CD4-positive, alpha-beta memory T cell (primary cell): ENCODE measurements at regions of chr3 and their contacts with region 1.

Region 1: DNA sequence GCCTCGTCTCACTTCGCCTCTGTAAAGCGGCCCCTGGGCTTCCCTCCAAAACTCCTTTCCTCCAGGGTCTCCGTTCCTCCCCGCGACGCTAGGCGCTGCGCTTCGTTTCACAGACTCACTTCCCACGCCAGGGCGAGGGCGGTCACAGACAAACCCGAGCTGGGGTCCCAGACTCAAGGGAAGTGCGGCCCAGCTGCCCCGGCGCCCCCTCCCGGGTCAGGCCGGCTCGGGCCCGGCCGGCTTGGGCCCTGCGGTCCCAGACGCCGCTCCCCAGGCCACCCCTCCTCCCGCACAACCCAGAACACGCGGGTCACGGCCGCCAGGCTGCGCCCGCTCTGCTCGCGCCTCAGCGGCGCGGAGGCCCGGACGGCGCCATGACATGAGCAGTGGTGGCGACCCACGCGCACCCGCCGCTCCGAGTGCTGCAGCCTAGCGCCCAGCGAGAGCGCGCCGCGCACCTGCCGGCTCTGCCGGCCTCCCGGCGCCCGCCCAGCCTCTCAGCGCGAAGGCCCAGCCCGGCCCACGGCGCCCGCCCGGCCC is 547 bp downstream of the NUP210 start:
- DNase-seq: peak in 4 of 5 donors; percentile 59 to 67 (median 66)
- H3K4me3 ChIP-seq: peak overlapping the region; percentile 55 to 84
- H3K4me3 Mint-ChIP-seq: peak overlapping the region; percentile 91 to 96 (median 94)
- H3K27ac ChIP-seq: peak overlapping the region; percentile 90
- H3K27ac Mint-ChIP-seq: peak overlapping the region; percentile 94 to 99 (median 97)
- H3K4me1 ChIP-seq: peaks cover 74% of the 10 kb centered on the region
- H3K4me1 Mint-ChIP-seq: peaks cover 45 to 85% (median 62%) of the 10 kb centered on the region in 4 donors
- H3K27me3 ChIP-seq: no peaks in the 10 kb centered on the region
- H3K27me3 Mint-ChIP-seq: no peaks in the 10 kb centered on the region

Region 2: GRCh38 chr3:13200946-13201345 is 218.6 kb before region 1 on chr3:
- CTCF ChIA-PET with region 1: no interaction called
- POLR2A ChIA-PET with region 1: no interaction called
- intact Hi-C with region 1: no loop called
- DNase-seq: no peak
- H3K4me3 ChIP-seq: no peak overlapping the region
- H3K4me3 Mint-ChIP-seq: no peak overlapping the region
- H3K27ac ChIP-seq: no peak overlapping the region
- H3K27ac Mint-ChIP-seq: no peak overlapping the region
- H3K4me1 ChIP-seq: peaks cover 10% of the 10 kb centered on the region
- H3K4me1 Mint-ChIP-seq: peaks cover 8 to 18% (median 12%) of the 10 kb centered on the region in 4 donors
- H3K27me3 ChIP-seq: peaks cover 3% of the 10 kb centered on the region
- H3K27me3 Mint-ChIP-seq: peaks cover 25 to 26% of the 10 kb centered on the region in 2 donors

Region 3: DNA sequence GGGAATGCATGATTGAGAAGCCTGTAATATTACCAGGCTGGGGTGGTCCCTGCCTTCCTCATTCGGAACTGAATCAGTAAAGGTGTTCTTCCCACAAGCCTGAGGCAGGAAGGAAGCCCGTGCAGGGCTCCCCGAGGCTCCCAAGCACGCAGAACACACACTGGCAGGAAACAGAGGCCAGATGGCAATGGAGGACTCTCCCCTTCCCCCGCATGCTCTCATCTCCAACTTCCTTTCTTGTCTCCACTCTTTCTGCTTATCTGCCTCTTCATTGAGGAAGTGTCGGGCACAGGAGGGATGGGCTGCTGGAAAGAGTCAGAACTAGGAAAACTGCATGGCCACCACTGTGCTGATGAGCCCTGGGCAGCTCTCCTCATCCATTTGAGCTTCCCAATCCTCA is 122.9 kb before region 1 on chr3:
- CTCF ChIA-PET with region 1: no interaction called
- POLR2A ChIA-PET with region 1: no interaction called
- intact Hi-C with region 1: no loop called
- DNase-seq: no peak
- H3K4me3 ChIP-seq: no peak overlapping the region
- H3K4me3 Mint-ChIP-seq: no peak overlapping the region
- H3K27ac ChIP-seq: no peak overlapping the region
- H3K27ac Mint-ChIP-seq: no peak overlapping the region
- H3K4me1 ChIP-seq: no peaks in the 10 kb centered on the region
- H3K4me1 Mint-ChIP-seq: peaks cover 0 to 8% (median under 1%) of the 10 kb centered on the region in 4 donors
- H3K27me3 ChIP-seq: peaks cover 6% of the 10 kb centered on the region
- H3K27me3 Mint-ChIP-seq: peaks cover 27 to 32% of the 10 kb centered on the region in 2 donors

Region 4: DNA sequence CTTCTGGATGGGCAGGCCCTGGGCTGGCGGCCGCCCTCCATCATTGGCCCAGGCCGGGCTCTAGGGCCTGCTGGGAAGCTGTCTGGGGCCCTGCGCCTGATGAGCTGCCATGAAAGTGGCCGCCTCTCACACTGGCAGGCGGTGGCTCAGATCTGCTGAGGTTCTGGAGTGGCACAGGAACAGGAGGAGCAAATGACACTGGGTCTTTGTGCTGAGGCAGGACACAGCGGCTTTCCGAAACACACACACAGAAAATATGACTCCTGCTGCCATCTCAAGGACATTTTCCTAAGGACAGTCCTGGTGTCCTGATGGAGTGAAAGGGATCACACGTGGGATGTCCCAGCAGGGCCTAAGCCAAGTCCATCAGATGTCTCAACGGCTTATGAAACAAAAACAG is 103.0 kb before region 1 on chr3:
- CTCF ChIA-PET with region 1: no interaction called
- POLR2A ChIA-PET with region 1: no interaction called
- intact Hi-C with region 1: no loop called
- DNase-seq: no peak
- H3K4me3 ChIP-seq: no peak overlapping the region
- H3K4me3 Mint-ChIP-seq: no peak overlapping the region
- H3K27ac ChIP-seq: no peak overlapping the region
- H3K27ac Mint-ChIP-seq: no peak overlapping the region
- H3K4me1 ChIP-seq: no peaks in the 10 kb centered on the region
- H3K4me1 Mint-ChIP-seq: peaks cover 0 to 3% (median 0%) of the 10 kb centered on the region in 4 donors
- H3K27me3 ChIP-seq: no peaks in the 10 kb centered on the region
- H3K27me3 Mint-ChIP-seq: no peaks in the 10 kb centered on the region

Region 5: GRCh38 chr3:13379201-13379830 is 40.3 kb before region 1 on chr3:
- CTCF ChIA-PET with region 1: no interaction called
- POLR2A ChIA-PET with region 1: interaction called, 3 read pairs
- intact Hi-C with region 1: loop called (anchors 5 kb)
- DNase-seq: no peak
- H3K4me3 ChIP-seq: no peak overlapping the region
- H3K4me3 Mint-ChIP-seq: no peak overlapping the region
- H3K27ac ChIP-seq: no peak overlapping the region
- H3K27ac Mint-ChIP-seq: peak overlapping the region in 1 of 7 donors; percentile 54
- H3K4me1 ChIP-seq: no peaks in the 10 kb centered on the region
- H3K4me1 Mint-ChIP-seq: peaks cover 0 to 7% (median 3%) of the 10 kb centered on the region in 4 donors
- H3K27me3 ChIP-seq: no peaks in the 10 kb centered on the region
- H3K27me3 Mint-ChIP-seq: no peaks in the 10 kb centered on the region

Region 6: GRCh38 chr3:13391308-13391707 is 28.3 kb before region 1 on chr3:
- CTCF ChIA-PET with region 1: interaction called, 31 read pairs
- POLR2A ChIA-PET with region 1: interaction called, 19 read pairs
- intact Hi-C with region 1: loop called (anchors 2 kb)
- DNase-seq: peak in 4 of 5 donors; percentile 19 to 28 (median 22)
- H3K4me3 ChIP-seq: no peak overlapping the region
- H3K4me3 Mint-ChIP-seq: no peak overlapping the region
- H3K27ac ChIP-seq: no peak overlapping the region
- H3K27ac Mint-ChIP-seq: peak overlapping the region in 6 of 7 donors; percentile 30 to 92 (median 65)
- H3K4me1 ChIP-seq: peaks cover 3% of the 10 kb centered on the region
- H3K4me1 Mint-ChIP-seq: peaks cover 8 to 30% (median 15%) of the 10 kb centered on the region in 4 donors
- H3K27me3 ChIP-seq: no peaks in the 10 kb centered on the region
- H3K27me3 Mint-ChIP-seq: no peaks in the 10 kb centered on the region

Region 7: DNA sequence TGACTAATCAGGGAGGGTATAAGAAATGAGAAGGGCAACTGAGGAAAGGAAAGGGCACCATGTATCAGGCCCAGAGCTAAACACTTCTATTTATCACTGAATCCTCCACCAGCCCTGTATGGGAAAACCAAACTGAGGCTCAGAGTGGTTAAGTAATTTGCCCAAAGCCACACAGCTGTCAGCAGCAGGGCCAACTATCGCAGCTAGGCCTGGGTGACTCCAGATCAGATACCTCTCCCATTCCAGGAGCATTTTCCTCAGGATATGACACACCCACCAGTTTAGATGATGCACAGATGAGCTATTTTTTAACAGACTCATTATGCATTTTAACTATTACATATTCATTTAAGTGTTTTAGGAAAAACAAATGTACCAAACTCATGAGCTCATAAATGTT is 14.0 kb before region 1 on chr3:
- CTCF ChIA-PET with region 1: interaction called, 11 read pairs
- POLR2A ChIA-PET with region 1: interaction called, 22 read pairs
- intact Hi-C with region 1: no loop called
- DNase-seq: no peak
- H3K4me3 ChIP-seq: no peak overlapping the region
- H3K4me3 Mint-ChIP-seq: peak overlapping the region in 1 of 8 donors; percentile 1
- H3K27ac ChIP-seq: no peak overlapping the region
- H3K27ac Mint-ChIP-seq: peak overlapping the region; percentile 8 to 86 (median 65)
- H3K4me1 ChIP-seq: peaks cover 36% of the 10 kb centered on the region
- H3K4me1 Mint-ChIP-seq: peaks cover 31 to 61% (median 45%) of the 10 kb centered on the region in 4 donors
- H3K27me3 ChIP-seq: no peaks in the 10 kb centered on the region
- H3K27me3 Mint-ChIP-seq: no peaks in the 10 kb centered on the region

Region 8: GRCh38 chr3:13479581-13480339 is 60.2 kb after region 1 on chr3 and contains the start of gene HDAC11:
- CTCF ChIA-PET with region 1: interaction called, 3 read pairs
- POLR2A ChIA-PET with region 1: interaction called, 10 read pairs
- intact Hi-C with region 1: loop called (anchors 2 kb)
- DNase-seq: peak; percentile 96 to 97 (median 96)
- H3K4me3 ChIP-seq: peak within 1 kb of the TSS; percentile 52 to 92
- H3K4me3 Mint-ChIP-seq: peak within 1 kb of the TSS; percentile 91 to 95 (median 94)
- H3K27ac ChIP-seq: peak within 1 kb of the TSS; percentile 90
- H3K27ac Mint-ChIP-seq: peak within 1 kb of the TSS; percentile 94 to 96 (median 96)
- H3K4me1 ChIP-seq: peaks cover 28% of the 10 kb centered on the region
- H3K4me1 Mint-ChIP-seq: peaks cover 6 to 35% (median 20%) of the 10 kb centered on the region in 4 donors
- H3K27me3 ChIP-seq: no peaks in the 10 kb centered on the region
- H3K27me3 Mint-ChIP-seq: peaks cover 0 to under 1% of the 10 kb centered on the region in 2 donors
- total RNA-seq, gene HDAC11: 7.1 to 7.6 TPM

Region 9: DNA sequence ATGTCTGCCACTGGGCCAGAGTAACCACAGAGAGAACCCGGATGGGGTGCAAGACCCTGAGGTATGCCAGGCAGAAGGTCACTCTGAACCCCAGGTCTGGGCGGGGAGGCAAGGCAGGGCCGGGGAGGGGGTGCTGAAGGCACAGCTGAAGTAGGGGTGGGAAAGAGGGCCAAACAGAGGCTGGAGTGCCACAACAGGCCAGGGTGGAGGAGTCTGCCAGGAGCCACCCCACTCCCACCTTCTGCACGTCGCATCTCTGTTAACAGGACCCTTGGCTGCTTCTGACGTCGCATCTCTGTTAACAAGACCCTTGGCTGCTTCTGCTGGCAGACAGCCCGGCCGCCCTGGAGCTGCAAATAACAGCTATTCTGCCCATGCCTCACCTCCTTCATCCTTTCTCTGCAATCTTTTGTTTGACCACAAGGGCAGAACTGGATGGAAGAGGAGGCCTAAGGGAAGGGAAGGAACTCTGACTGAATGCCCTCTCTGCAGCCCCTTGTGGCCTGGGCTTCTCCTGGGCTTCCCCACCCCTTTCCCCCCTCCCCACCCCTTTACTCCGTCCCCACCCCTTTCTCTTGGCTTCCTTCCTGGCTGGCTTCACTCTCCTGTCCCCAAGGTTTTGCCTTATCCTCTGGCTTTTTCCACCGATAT is 108.8 kb after region 1 on chr3:
- CTCF ChIA-PET with region 1: no interaction called
- POLR2A ChIA-PET with region 1: no interaction called
- intact Hi-C with region 1: no loop called
- DNase-seq: no peak
- H3K4me3 ChIP-seq: no peak overlapping the region
- H3K4me3 Mint-ChIP-seq: no peak overlapping the region
- H3K27ac ChIP-seq: no peak overlapping the region
- H3K27ac Mint-ChIP-seq: no peak overlapping the region
- H3K4me1 ChIP-seq: no peaks in the 10 kb centered on the region
- H3K4me1 Mint-ChIP-seq: no peaks in the 10 kb centered on the region
- H3K27me3 ChIP-seq: no peaks in the 10 kb centered on the region
- H3K27me3 Mint-ChIP-seq: peaks cover 4 to 5% of the 10 kb centered on the region in 2 donors